B cell (primary cell): ENCODE measurements at regions of chr2 and their contacts with region 1.

Region 1: GRCh38 chr2:134892282-134893070 is 26.1 kb upstream of the CCNT2 start:
- DNase-seq: no peak
- ATAC-seq: no peak
- H3K4me3 ChIP-seq: no peak overlapping the region
- H3K4me3 Mint-ChIP-seq: no peak overlapping the region
- H3K27ac ChIP-seq: no peak overlapping the region
- H3K27ac Mint-ChIP-seq: no peak overlapping the region
- H3K4me1 ChIP-seq: no peaks in the 10 kb centered on the region
- H3K4me1 Mint-ChIP-seq: no peaks in the 10 kb centered on the region
- H3K27me3 ChIP-seq: no peaks in the 10 kb centered on the region
- H3K27me3 Mint-ChIP-seq: no peaks in the 10 kb centered on the region
- CTCF ChIP-seq: no peak

Region 2: GRCh38 chr2:134453973-134454372 is 438.5 kb before region 1 on chr2:
- CTCF ChIA-PET with region 1: interaction called, 35 read pairs
- POLR2A ChIA-PET with region 1: no interaction called
- intact Hi-C with region 1: no loop called
- DNase-seq: no peak
- ATAC-seq: no peak
- H3K4me3 ChIP-seq: no peak overlapping the region
- H3K4me3 Mint-ChIP-seq: no peak overlapping the region
- H3K27ac ChIP-seq: no peak overlapping the region
- H3K27ac Mint-ChIP-seq: no peak overlapping the region
- H3K4me1 ChIP-seq: no peaks in the 10 kb centered on the region
- H3K4me1 Mint-ChIP-seq: no peaks in the 10 kb centered on the region
- H3K27me3 ChIP-seq: no peaks in the 10 kb centered on the region
- H3K27me3 Mint-ChIP-seq: no peaks in the 10 kb centered on the region
- CTCF ChIP-seq: no peak

Region 3: DNA sequence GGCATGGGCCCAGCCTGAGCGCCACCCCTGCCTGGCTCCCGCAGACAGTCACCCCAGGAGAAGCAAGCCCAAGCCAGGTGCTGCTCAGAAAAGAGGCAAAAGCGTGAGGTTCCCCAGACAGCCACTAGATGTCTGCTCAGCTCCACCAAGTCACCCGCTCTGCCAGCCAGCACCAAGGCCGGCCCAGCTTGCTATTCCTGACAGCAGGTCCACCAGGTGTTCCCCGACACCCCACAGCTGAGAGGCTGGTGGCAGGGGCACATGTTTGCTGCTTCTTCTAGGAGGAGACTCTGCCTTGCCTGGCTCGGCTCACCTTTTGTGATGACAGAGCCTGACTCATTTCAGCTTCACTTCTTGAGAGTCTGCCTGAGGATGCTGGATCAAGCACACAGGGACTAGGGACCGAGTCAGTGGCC is 431.9 kb before region 1 on chr2:
- CTCF ChIA-PET with region 1: interaction called, 20 read pairs
- POLR2A ChIA-PET with region 1: no interaction called
- intact Hi-C with region 1: no loop called
- DNase-seq: peak; percentile 59
- ATAC-seq: peak; percentile 76
- H3K4me3 ChIP-seq: no peak overlapping the region
- H3K4me3 Mint-ChIP-seq: no peak overlapping the region
- H3K27ac ChIP-seq: no peak overlapping the region
- H3K27ac Mint-ChIP-seq: peak overlapping the region; percentile 37
- H3K4me1 ChIP-seq: no peaks in the 10 kb centered on the region
- H3K4me1 Mint-ChIP-seq: peaks cover 3% of the 10 kb centered on the region
- H3K27me3 ChIP-seq: no peaks in the 10 kb centered on the region
- H3K27me3 Mint-ChIP-seq: no peaks in the 10 kb centered on the region
- CTCF ChIP-seq: peak; percentile 61

Region 4: GRCh38 chr2:134739879-134740301 is 152.6 kb before region 1 on chr2:
- CTCF ChIA-PET with region 1: no interaction called
- POLR2A ChIA-PET with region 1: no interaction called
- intact Hi-C with region 1: no loop called
- DNase-seq: peak; percentile 91
- ATAC-seq: peak; percentile 81
- H3K4me3 ChIP-seq: peak overlapping the region in 2 of 5 experiments; percentile 28 to 46
- H3K4me3 Mint-ChIP-seq: peak overlapping the region; percentile 62
- H3K27ac ChIP-seq: peak overlapping the region; percentile 86 to 90
- H3K27ac Mint-ChIP-seq: peak overlapping the region; percentile 93
- H3K4me1 ChIP-seq: peaks cover 64 to 68% of the 10 kb centered on the region in 2 donors
- H3K4me1 Mint-ChIP-seq: peaks cover 71% of the 10 kb centered on the region
- H3K27me3 ChIP-seq: no peaks in the 10 kb centered on the region
- H3K27me3 Mint-ChIP-seq: no peaks in the 10 kb centered on the region
- CTCF ChIP-seq: no peak